Mammary epithelial cell (primary cell): ENCODE measurements at regions of chr10 and their contacts with region 1.

Region 1: GRCh38 chr10:15106352-15107013 is 9.3 kb downstream of the RPP38 start:
- DNase-seq: peak; percentile 53
- H3K4me3 ChIP-seq: no peak overlapping the region
- H3K27ac ChIP-seq: no peak overlapping the region
- H3K4me1 ChIP-seq: no peaks in the 10 kb centered on the region
- H3K27me3 ChIP-seq: no peaks in the 10 kb centered on the region
- CTCF ChIP-seq: peak; percentile 96 to 98

Region 2: GRCh38 chr10:14499601-14499904 is 606.9 kb before region 1 on chr10:
- CTCF ChIA-PET with region 1: no interaction called
- dilution Hi-C with region 1: no loop called
- in situ Hi-C with region 1: no loop called
- intact Hi-C with region 1: loop called (anchors 1 kb)
- DNase-seq: no peak
- H3K4me3 ChIP-seq: no peak overlapping the region
- H3K27ac ChIP-seq: no peak overlapping the region
- H3K4me1 ChIP-seq: no peaks in the 10 kb centered on the region
- H3K27me3 ChIP-seq: no peaks in the 10 kb centered on the region
- CTCF ChIP-seq: no peak

Region 3: DNA sequence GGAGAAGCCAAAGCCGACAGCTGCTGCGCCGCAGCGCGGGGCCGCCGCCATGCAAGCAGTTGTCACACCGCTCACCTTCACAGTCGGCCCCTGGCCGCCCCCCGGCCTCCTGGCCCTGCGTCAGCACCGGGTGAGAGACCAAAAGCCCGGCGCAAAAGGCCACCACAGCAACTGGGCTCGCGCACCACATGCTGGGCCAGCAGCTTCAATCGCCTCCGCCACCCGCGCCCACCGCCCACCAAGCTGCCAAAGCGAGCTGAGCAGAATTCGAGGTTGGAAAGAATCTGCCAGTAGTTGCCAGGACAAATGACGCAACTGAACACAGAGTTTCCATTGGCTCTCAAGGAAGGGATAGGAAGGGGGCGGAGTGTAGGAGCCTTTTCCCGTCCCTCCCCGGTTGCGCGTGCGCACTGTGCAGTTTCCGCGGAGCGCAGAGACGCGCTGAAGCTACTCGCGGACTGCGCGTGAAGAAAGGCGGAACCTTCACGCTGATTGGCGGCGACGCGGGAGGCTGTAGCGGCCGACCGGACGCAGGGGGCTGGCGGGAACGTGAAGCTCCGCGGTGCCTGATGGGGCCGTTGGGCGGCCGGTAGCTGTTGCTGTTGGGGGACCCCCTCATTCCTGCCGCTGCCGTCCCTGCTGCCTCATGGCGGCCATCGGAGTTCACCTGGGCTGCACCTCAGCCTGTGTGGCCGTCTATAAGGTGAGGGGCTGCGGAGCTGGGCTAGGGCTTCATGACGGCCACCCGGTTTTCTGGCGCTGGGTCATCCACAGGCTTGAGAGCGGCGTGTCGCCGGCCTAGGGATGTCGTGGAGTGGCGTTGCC is 268.5 kb before region 1 on chr10 and contains the starts of genes CDNF, HSPA14 and MSANTD7:
- CTCF ChIA-PET with region 1: no interaction called
- dilution Hi-C with region 1: no loop called
- in situ Hi-C with region 1: no loop called
- intact Hi-C with region 1: loop called (anchors 2 kb)
- DNase-seq: peak; percentile 99
- H3K4me3 ChIP-seq: peak within 1 kb of the TSS; percentile 72 to 90 (median 81)
- H3K27ac ChIP-seq: peak within 1 kb of the TSS; percentile 90
- H3K4me1 ChIP-seq: peaks cover 8% of the 10 kb centered on the region
- H3K27me3 ChIP-seq: no peaks in the 10 kb centered on the region
- CTCF ChIP-seq: no peak
- total RNA-seq, gene CDNF: 0.83 to 1.5 TPM
- total RNA-seq, gene HSPA14: 11.5 to 20.2 TPM
- total RNA-seq, gene MSANTD7: 15.1 to 20.5 TPM

Region 4: GRCh38 chr10:14995964-14996565 is 110.4 kb before region 1 on chr10:
- CTCF ChIA-PET with region 1: no interaction called
- dilution Hi-C with region 1: no loop called
- in situ Hi-C with region 1: no loop called
- intact Hi-C with region 1: loop called (anchors 1 kb)
- DNase-seq: no peak
- H3K4me3 ChIP-seq: no peak overlapping the region
- H3K27ac ChIP-seq: no peak overlapping the region
- H3K4me1 ChIP-seq: no peaks in the 10 kb centered on the region
- H3K27me3 ChIP-seq: no peaks in the 10 kb centered on the region
- CTCF ChIP-seq: no peak

Region 5: GRCh38 chr10:15245530-15245929 is 139.0 kb after region 1 on chr10:
- CTCF ChIA-PET with region 1: no interaction called
- dilution Hi-C with region 1: no loop called
- in situ Hi-C with region 1: no loop called
- intact Hi-C with region 1: no loop called
- DNase-seq: no peak
- H3K4me3 ChIP-seq: no peak overlapping the region
- H3K27ac ChIP-seq: no peak overlapping the region
- H3K4me1 ChIP-seq: no peaks in the 10 kb centered on the region
- H3K27me3 ChIP-seq: no peaks in the 10 kb centered on the region
- CTCF ChIP-seq: peak; percentile 13 to 28

Region 6: DNA sequence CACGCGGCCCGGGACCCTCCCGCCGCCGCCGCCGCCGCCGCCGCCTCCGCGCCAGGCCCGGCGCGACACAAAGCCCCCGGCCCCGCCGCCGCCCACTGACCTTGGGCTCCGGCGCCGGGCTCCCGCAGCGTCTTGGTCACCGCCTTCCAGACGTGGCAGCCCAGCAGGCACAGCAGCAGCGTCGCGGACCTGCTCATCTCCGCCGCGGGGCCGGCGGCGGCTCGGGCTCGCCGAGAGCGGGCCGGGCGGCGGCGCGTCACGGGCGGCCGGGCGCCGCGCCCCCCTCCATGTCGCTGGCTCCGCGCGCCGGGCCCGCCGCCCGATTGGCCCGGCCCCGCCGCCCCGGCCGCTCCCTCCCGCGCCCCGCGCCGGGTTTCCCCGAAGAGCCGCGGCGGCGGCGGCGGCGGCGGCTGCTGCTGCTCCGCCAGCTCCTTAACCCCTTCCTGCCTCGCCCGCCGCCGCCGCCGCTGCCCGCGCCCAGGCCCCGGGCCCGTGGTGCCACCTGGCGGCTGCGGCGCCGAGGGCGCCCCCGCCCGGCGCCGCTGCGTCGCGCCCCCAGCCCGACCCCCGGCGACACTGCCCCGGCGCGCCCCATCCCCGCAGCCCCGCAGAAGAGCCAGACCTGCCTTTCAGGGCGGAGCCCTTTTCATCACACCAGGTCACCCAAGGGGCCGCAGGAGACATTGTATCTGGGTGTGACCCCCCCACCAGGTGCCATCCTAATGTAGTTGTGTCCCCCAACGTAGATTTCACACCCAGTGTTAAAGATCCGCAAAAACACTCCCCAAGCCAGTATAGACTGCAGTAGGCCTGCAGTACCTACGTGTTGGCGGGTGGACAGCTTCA is 264.6 kb after region 1 on chr10 and contains the start of gene FAM171A1:
- CTCF ChIA-PET with region 1: no interaction called
- dilution Hi-C with region 1: no loop called
- in situ Hi-C with region 1: no loop called
- intact Hi-C with region 1: loop called (anchors 5 kb)
- DNase-seq: peak; percentile 56
- H3K4me3 ChIP-seq: peak within 1 kb of the TSS; percentile 65 to 87 (median 68)
- H3K27ac ChIP-seq: no peak within 1 kb of the TSS
- H3K4me1 ChIP-seq: peaks cover 4% of the 10 kb centered on the region
- H3K27me3 ChIP-seq: no peaks in the 10 kb centered on the region
- CTCF ChIP-seq: peak in 1 of 2 donors; percentile 17
- total RNA-seq, gene FAM171A1: 15.5 to 25.2 TPM